Esophagus muscularis mucosa (tissue), 4 donors: ENCODE measurements at regions of chr12 and their contacts with region 1.

Region 1: DNA sequence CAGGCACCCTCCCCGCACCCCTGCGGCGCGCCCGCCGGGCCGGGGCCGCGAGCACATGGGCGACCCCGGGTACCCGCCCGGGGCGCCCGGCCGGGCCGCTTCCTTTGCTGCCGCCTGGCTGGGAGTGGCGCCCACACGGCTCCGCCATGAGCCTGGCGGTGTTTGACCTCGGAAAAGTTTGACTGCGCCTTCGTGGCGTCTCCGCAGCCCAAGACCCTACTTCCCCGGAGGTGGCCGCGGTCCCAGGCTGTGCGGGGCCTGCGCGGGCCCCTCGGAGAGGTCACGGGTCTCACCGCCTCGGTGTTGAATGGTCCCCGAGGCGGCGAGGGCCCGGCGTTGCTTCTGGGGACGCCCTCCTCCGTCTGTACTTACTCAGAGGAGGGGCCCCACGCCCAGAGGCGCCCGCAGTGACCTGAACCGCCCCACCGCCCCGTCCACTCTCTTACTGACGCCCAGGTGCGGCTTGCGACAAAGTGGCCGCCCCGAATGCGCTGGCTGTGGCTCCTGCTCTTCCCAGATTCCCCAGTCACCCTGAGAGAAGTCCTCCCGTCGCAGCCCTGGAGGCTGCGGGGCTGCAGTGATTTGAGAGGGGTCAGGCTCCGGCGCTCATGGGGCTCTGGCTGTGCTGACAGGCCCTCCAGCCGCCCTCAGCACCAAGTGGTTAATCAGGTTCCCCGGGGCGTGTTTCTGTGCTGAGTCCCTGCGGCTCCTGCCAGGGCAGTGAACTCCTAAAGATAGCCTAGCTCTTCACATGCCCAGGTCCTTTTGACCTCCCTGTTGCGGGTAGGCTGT is 5.8 kb downstream of the KMT5A start:
- DNase-seq: no peak
- H3K4me3 ChIP-seq: peak overlapping the region; percentile 77 to 88 (median 77)
- H3K27ac ChIP-seq: peak overlapping the region; percentile 89 to 96 (median 92)
- H3K4me1 ChIP-seq: peaks cover 41 to 73% (median 70%) of the 10 kb centered on the region in 4 donors
- H3K27me3 ChIP-seq: no peaks in the 10 kb centered on the region
- CTCF ChIP-seq: no peak
- EP300 ChIP-seq: no peak
- POLR2A ChIP-seq: no peak

Region 2: GRCh38 chr12:123278101-123278627 is 111.6 kb before region 1 on chr12:
- intact Hi-C with region 1: no loop called
- DNase-seq: no peak
- H3K4me3 ChIP-seq: no peak overlapping the region
- H3K27ac ChIP-seq: peak overlapping the region in 2 of 4 donors; percentile 7 to 40
- H3K4me1 ChIP-seq: no peaks in the 10 kb centered on the region
- H3K27me3 ChIP-seq: no peaks in the 10 kb centered on the region
- CTCF ChIP-seq: no peak
- EP300 ChIP-seq: no peak
- POLR2A ChIP-seq: no peak

Region 3: DNA sequence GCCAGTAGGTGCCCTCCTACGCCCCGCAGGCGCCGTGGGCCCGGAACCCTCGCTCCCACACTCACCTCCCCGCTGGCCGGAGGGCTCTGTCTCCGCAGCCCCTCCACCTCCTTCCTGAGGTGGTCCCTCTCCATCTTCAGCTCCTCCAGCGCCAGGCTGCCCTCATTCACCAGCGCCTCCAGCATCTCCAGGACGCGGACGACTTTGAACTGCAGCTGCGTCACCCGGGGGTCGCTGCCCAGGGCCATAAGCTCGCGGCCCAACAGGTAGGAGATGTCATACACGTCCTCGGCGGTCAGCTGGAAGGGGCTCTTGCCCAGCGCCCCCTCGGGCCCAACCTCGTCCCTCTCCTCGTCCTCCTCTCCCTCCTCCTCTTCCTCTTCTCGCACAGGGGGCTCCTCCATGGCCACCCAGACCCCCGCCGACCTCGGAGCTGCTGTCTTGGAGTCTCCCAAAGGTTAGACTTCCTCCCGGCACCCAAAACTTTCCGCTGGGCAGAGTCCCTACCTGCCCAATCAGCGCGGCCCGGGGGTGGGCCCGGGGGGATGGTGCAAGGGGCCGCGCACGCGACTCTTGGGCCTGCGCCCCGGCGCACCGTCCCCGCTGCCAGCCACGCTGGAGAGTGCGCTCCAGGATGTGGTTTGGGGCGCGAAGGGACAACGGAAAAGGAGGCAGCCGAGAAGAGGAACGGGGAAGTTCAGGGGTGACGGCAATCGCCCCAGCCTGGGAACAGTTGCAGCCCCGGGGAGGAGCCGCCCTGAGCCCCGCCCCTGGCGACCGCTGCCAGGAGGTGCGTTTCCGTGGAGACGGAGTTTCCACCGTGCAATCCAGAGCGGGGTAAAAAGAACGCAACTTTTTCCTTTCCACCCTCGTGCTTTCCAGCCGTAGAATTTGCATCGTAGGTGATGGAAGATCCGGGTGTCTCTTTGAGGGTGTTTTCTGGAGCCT is 46.5 kb after region 1 on chr12 and contains the start of gene RILPL2:
- intact Hi-C with region 1: no loop called
- DNase-seq: peak; percentile 96
- H3K4me3 ChIP-seq: peak within 1 kb of the TSS; percentile 66 to 94 (median 78)
- H3K27ac ChIP-seq: peak within 1 kb of the TSS; percentile 73 to 83 (median 78)
- H3K4me1 ChIP-seq: peaks cover 22 to 51% (median 49%) of the 10 kb centered on the region in 4 donors
- H3K27me3 ChIP-seq: no peaks in the 10 kb centered on the region
- CTCF ChIP-seq: peak in 1 of 3 experiments; percentile 13
- EP300 ChIP-seq: no peak
- POLR2A ChIP-seq: peak; percentile 35
- total RNA-seq, gene RILPL2: 5.4 to 7.6 (median 5.8) TPM

Region 4: GRCh38 chr12:123457980-123458783 is 68.4 kb after region 1 on chr12 and contains the start of gene SNRNP35:
- intact Hi-C with region 1: loop called (anchors 5 kb)
- DNase-seq: peak; percentile 95
- H3K4me3 ChIP-seq: peak within 1 kb of the TSS; percentile 91 to 98 (median 96)
- H3K27ac ChIP-seq: peak within 1 kb of the TSS; percentile 98 to 100 (median 100)
- H3K4me1 ChIP-seq: peaks cover 16 to 24% (median 20%) of the 10 kb centered on the region in 4 donors
- H3K27me3 ChIP-seq: no peaks in the 10 kb centered on the region
- CTCF ChIP-seq: no peak
- EP300 ChIP-seq: no peak
- POLR2A ChIP-seq: no peak
- total RNA-seq, gene SNRNP35: 11.6 to 27.4 (median 17.0) TPM